ENCODE measurements at regions of chr15 and their contacts with region 1.

Region 1: DNA sequence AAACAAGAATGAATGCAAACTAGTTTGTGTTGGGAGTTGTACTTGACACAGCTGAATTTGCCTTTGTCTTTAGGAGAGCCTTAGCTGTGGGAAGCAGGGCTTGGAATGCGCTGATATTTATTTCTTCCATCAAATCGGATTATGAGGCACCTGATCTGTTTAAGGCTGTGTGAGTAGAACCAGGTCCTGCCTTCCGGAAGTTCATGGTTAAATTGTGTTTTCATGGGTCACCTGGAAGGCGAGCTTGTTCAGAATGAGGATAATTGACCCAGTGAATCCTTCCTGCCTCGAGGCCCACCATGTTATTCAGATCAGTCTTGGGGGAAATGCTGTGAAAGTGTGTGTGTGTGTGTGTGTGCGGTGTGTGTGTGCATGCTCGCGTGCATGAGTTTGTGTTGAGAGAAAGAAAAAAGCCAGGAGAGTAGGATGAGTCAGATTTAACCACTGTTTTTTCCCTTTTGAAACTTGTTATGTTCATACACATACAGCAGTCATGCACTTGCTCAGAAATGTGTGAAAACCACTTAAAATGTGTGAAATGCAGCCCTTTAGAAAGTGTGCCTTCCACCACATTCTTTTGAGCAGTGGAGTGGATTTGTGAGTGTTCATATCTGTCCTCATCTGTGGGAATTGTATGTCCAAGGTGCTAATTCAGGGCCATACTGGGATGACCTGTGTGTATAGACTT is 36.7 kb downstream of the SMAD3 start:
- DNase-seq: peak; percentile 80
- H3K4me3 Mint-ChIP-seq: no peak overlapping the region
- H3K27ac Mint-ChIP-seq: no peak overlapping the region
- H3K4me1 Mint-ChIP-seq: peaks cover 31% of the 10 kb centered on the region
- H3K27me3 Mint-ChIP-seq: no peaks in the 10 kb centered on the region

Region 2: GRCh38 chr15:66789029-66790025 is 312.7 kb before region 1 on chr15:
- CTCF ChIA-PET with region 1: no interaction called
- intact Hi-C with region 1: no loop called
- DNase-seq: peak; percentile 12
- H3K4me3 Mint-ChIP-seq: no peak overlapping the region
- H3K27ac Mint-ChIP-seq: no peak overlapping the region
- H3K4me1 Mint-ChIP-seq: no peaks in the 10 kb centered on the region
- H3K27me3 Mint-ChIP-seq: no peaks in the 10 kb centered on the region

Region 3: DNA sequence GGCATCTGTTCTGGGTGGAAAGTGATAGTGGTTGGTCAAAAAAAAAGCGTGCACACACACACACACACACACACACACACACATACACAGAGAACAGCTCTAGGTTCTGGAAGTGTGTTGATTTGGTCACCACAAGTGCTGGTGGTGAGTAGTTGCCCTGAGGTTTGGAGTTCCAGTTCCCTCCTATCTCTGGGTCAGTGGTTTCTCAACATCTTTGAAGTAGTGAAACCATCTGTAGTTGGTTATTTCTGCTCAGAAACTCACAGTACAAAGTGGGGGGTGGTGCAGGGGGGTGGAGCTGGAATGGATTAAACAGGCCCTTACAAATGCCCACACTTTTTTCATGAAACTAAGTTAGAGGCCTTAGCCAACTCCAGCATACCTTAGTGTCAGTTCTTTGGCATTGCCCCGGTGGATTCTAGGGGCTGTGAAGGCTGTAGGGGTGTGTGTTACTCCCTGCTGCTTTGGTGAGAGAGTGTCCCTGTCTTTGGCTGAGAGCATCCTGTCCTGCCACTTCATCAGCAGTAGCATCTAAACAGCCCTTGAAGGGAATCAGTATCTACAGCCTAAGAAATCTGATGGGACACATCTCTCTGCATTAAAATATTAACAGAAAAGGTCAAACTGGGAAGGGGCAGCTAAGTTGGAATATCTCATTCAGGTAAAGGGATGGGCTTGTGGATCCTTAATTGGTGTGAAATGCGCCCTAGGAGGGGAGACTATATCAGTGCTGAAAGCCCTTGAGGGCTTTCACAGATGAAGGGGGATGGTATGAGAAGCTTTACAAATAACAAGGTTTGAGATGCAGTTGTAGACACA is 16.0 kb before region 1 on chr15:
- CTCF ChIA-PET with region 1: interaction called, 9 read pairs
- intact Hi-C with region 1: loop called (anchors 1 kb)
- DNase-seq: peak; percentile 44
- H3K4me3 Mint-ChIP-seq: no peak overlapping the region
- H3K27ac Mint-ChIP-seq: peak overlapping the region; percentile 78
- H3K4me1 Mint-ChIP-seq: peaks cover 88% of the 10 kb centered on the region
- H3K27me3 Mint-ChIP-seq: no peaks in the 10 kb centered on the region

Region 4: GRCh38 chr15:67114846-67115600 is 13.0 kb after region 1 on chr15:
- CTCF ChIA-PET with region 1: interaction called, 9 read pairs
- intact Hi-C with region 1: loop called (anchors 1 kb)
- DNase-seq: peak; percentile 46
- H3K4me3 Mint-ChIP-seq: no peak overlapping the region
- H3K27ac Mint-ChIP-seq: peak overlapping the region; percentile 81
- H3K4me1 Mint-ChIP-seq: peaks cover 81% of the 10 kb centered on the region
- H3K27me3 Mint-ChIP-seq: no peaks in the 10 kb centered on the region

Region 5: GRCh38 chr15:67134067-67134838 is 32.2 kb after region 1 on chr15:
- CTCF ChIA-PET with region 1: interaction called, 8 read pairs
- intact Hi-C with region 1: loop called (anchors 1 kb)
- DNase-seq: peak; percentile 84
- H3K4me3 Mint-ChIP-seq: peak overlapping the region; percentile 79
- H3K27ac Mint-ChIP-seq: peak overlapping the region; percentile 93
- H3K4me1 Mint-ChIP-seq: peaks cover 85% of the 10 kb centered on the region
- H3K27me3 Mint-ChIP-seq: no peaks in the 10 kb centered on the region

Region 6: DNA sequence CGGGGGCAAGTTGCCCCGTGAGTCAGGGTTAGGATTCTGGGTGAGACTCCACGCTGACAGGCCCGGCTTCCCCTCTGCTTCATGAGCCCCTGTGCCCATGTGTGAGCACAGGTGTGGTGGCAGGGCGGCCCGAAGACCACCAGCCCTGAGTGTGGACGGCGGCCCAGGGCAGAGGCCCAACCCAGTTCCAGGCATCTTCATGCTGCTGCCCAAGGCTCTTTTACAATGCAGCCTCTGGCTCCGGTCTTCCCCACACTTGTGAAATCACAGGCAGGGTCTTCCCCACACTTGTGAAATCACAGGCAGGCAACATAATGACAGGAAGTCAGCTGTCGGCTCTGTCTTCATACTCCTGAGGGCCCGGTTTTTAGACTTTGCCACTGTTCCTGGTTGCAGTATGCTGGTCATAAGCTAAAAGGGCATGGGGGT is 73.6 kb after region 1 on chr15:
- CTCF ChIA-PET with region 1: no interaction called
- intact Hi-C with region 1: loop called (anchors 1 kb)
- DNase-seq: peak; percentile 89
- H3K4me3 Mint-ChIP-seq: peak overlapping the region; percentile 9
- H3K27ac Mint-ChIP-seq: peak overlapping the region; percentile 91
- H3K4me1 Mint-ChIP-seq: peaks cover 56% of the 10 kb centered on the region
- H3K27me3 Mint-ChIP-seq: no peaks in the 10 kb centered on the region

Measured in activated naive CD4-positive, alpha-beta T cell treated with anti-CD3 and anti-CD28 coated beads for 36 hours (primary cell).